Naive thymus-derived CD8-positive, alpha-beta T cell (primary cell): ENCODE measurements at regions of chr21 and their contacts with region 1.

Region 1: GRCh38 chr21:36319765-36320420 is at the start of gene MORC3:
- DNase-seq: peak; percentile 95 to 99 (median 98)
- ATAC-seq: peak; percentile 88 to 91
- H3K4me3 Mint-ChIP-seq: peak within 1 kb of the TSS; percentile 88 to 99 (median 94)
- H3K27ac Mint-ChIP-seq: peak within 1 kb of the TSS; percentile 90 to 98 (median 96)
- H3K4me1 Mint-ChIP-seq: peaks cover 21 to 49% (median 38%) of the 10 kb centered on the region in 4 donors
- H3K27me3 Mint-ChIP-seq: no peaks in the 10 kb centered on the region
- polyA plus RNA-seq, gene MORC3: 21.6 to 30.3 (median 27.7) TPM

Region 2: DNA sequence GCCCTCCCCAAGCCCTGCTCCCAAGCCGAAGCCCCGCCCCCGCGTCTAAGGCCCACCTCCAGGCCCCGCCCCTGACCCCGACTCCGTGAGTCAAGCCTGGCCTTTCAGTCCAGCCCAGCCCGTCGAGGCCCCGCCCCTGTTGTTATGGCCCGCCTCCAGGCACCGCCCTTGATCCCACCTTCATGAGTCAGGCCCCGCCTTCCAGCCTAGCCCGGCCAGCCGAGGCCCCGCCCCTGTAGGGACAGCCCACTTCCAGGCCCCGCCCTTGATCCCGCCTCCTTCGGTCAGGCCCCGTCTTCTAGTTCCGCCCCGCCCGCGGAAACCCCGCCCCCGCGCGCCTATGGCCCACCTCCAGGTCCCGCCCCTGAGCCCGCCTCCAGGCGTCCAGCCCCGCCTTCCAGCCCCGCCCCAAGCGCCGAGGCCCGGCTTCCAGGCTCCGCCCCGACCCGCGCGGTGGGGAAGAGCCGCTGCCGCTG is 163.5 kb before region 1 on chr21:
- POLR2A ChIA-PET with region 1: interaction called, 19 read pairs
- DNase-seq: peak; percentile 99 to 100 (median 100)
- ATAC-seq: peak; percentile 84 to 89
- H3K4me3 Mint-ChIP-seq: peak overlapping the region; percentile 72 to 91 (median 82)
- H3K27ac Mint-ChIP-seq: peak overlapping the region in 7 of 10 donors; percentile 61 to 91 (median 85)
- H3K4me1 Mint-ChIP-seq: peaks cover 6 to 43% (median 32%) of the 10 kb centered on the region in 4 donors
- H3K27me3 Mint-ChIP-seq: no peaks in the 10 kb centered on the region

Region 3: GRCh38 chr21:36175771-36176565 is 143.9 kb before region 1 on chr21:
- POLR2A ChIA-PET with region 1: interaction called, 25 read pairs
- DNase-seq: peak in 2 of 10 donors; percentile 20 to 22
- ATAC-seq: no peak
- H3K4me3 Mint-ChIP-seq: peak overlapping the region in 3 of 10 donors; percentile 8 to 39 (median 30)
- H3K27ac Mint-ChIP-seq: peak overlapping the region; percentile 64 to 90 (median 84)
- H3K4me1 Mint-ChIP-seq: peaks cover 7 to 49% (median 32%) of the 10 kb centered on the region in 4 donors
- H3K27me3 Mint-ChIP-seq: no peaks in the 10 kb centered on the region

Region 4: DNA sequence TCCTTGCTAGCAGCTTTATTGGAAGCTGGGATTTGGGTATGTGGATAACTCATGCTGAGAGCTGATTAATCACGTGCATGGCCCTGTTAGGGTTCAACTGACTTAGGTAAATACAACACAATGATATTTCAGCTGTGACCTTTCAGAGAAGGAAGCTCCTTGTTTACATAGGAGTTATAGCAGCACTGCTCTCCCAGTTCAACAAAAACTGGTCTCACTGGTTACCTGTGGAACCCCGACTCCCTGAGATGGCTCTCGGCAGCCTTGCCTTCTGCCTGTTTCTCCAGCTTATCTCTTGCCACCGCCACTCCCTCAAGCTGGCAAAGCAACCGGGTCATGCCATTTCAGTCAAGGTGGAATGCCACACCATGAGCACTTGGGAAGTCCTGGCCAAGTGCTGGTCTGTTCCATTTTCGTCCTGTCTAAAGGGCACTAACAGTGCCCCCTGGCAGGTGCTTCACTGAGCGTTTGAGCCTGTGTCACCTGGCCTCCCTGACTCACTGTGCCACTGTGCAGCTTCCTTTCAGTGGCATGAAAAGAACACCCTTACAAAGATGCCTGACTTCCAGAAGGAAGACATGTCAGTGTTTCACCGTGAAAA is 131.7 kb before region 1 on chr21:
- POLR2A ChIA-PET with region 1: no interaction called
- DNase-seq: no peak
- ATAC-seq: no peak
- H3K4me3 Mint-ChIP-seq: no peak overlapping the region
- H3K27ac Mint-ChIP-seq: peak overlapping the region in 2 of 10 donors; percentile 19 to 67
- H3K4me1 Mint-ChIP-seq: peaks cover 10 to 20% (median 14%) of the 10 kb centered on the region in 4 donors
- H3K27me3 Mint-ChIP-seq: no peaks in the 10 kb centered on the region

Region 5: DNA sequence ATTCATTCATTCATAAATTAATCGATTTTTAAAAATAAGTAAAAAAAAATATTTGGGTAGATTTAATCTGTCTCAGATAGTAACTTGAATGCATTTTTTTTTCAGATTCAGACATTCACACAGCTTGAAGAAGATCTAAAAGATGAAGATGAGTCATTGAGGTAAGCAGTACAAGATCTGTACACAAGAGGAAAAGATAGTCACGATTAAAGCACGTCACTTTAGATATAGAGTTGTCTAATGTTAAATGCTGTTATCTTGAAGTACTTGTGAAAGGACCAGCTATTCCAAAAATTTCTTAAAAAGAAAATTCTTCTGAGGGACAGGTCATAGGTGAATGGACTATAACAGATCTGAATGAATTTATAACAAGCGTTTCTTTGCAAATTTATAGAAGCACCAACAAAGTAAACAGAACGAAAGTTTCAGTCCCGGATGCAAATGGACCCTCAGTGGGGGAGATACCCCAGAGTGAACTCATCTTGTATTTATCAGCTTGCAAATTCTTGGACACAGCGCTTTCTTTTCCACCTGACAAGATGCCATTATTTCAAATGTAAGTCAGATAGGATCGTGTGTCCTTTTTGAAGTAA is 31.1 kb before region 1 on chr21:
- POLR2A ChIA-PET with region 1: interaction called, 65 read pairs
- DNase-seq: peak in 2 of 10 donors; percentile 40 to 44
- ATAC-seq: peak; percentile 84 to 85
- H3K4me3 Mint-ChIP-seq: peak overlapping the region; percentile 8 to 82 (median 58)
- H3K27ac Mint-ChIP-seq: peak overlapping the region; percentile 79 to 98 (median 91)
- H3K4me1 Mint-ChIP-seq: peaks cover 1 to 21% (median 14%) of the 10 kb centered on the region in 4 donors
- H3K27me3 Mint-ChIP-seq: no peaks in the 10 kb centered on the region

Region 6: GRCh38 chr21:36297921-36298594 is 21.8 kb before region 1 on chr21:
- POLR2A ChIA-PET with region 1: interaction called, 207 read pairs
- DNase-seq: peak; percentile 29 to 88 (median 70)
- ATAC-seq: peak; percentile 98 to 100
- H3K4me3 Mint-ChIP-seq: peak overlapping the region; percentile 71 to 89 (median 82)
- H3K27ac Mint-ChIP-seq: peak overlapping the region; percentile 79 to 99 (median 97)
- H3K4me1 Mint-ChIP-seq: peaks cover 12 to 52% (median 38%) of the 10 kb centered on the region in 4 donors
- H3K27me3 Mint-ChIP-seq: no peaks in the 10 kb centered on the region

Region 7: GRCh38 chr21:36330904-36331303 is 11.0 kb after region 1 on chr21:
- POLR2A ChIA-PET with region 1: interaction called, 17 read pairs
- DNase-seq: peak in 9 of 10 donors; percentile 16 to 70 (median 48)
- ATAC-seq: peak; percentile 84 to 85
- H3K4me3 Mint-ChIP-seq: peak overlapping the region in 5 of 10 donors; percentile 3 to 42 (median 26)
- H3K27ac Mint-ChIP-seq: peak overlapping the region; percentile 2 to 91 (median 84)
- H3K4me1 Mint-ChIP-seq: peaks cover 19 to 70% (median 60%) of the 10 kb centered on the region in 4 donors
- H3K27me3 Mint-ChIP-seq: no peaks in the 10 kb centered on the region

Region 8: GRCh38 chr21:36354918-36355680 is 35.2 kb after region 1 on chr21:
- POLR2A ChIA-PET with region 1: no interaction called
- DNase-seq: no peak
- ATAC-seq: no peak
- H3K4me3 Mint-ChIP-seq: no peak overlapping the region
- H3K27ac Mint-ChIP-seq: peak overlapping the region in 6 of 10 donors; percentile 22 to 79 (median 42)
- H3K4me1 Mint-ChIP-seq: peaks cover 5 to 15% (median 9%) of the 10 kb centered on the region in 4 donors
- H3K27me3 Mint-ChIP-seq: no peaks in the 10 kb centered on the region